PC-9 (cell line): ENCODE measurements at regions of chr17 and their contacts with region 1.

Region 1: GRCh38 chr17:19753049-19753444 is 4.9 kb upstream of the ALDH3A1 start:
- DNase-seq: peak; percentile 97 to 98
- H3K4me3 ChIP-seq: peak overlapping the region; percentile 52; the same call in 1 of the 2 replicates
- H3K27ac ChIP-seq: peak overlapping the region; percentile 100
- H3K4me1 ChIP-seq: peaks cover 64% of the 10 kb centered on the region
- H3K27me3 ChIP-seq: no peaks in the 10 kb centered on the region
- CTCF ChIP-seq: no peak

Region 2: DNA sequence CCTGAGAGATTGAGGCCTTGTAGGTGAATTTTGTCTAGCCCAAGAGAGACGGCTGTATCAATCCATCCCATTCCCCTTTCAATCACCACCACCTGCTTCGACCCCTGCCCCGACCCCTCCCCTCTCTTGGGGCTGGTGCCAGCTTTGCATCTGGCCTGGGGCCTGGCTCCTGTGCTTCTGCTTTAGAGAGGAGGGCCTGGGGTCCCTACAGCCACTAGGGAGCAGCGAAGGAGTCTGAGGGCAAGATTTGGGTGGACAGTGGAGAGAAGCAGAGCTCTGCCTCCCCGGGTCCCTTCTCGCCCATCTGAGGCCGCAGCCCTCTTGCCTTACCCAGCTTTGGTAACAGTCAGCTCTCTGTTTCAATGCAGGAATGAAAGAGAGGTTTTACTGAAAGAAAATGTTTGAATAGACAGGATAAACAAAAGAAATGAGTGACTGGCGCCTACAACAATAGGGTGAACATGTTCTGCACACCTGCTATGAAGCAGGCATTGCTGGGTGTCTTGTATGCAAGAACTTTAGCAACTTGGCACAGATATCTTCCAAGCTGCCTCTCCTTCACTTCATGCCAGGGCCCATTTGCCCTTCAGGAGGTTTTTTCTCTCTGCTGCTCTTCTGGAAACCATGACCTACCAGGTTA is 162.0 kb before region 1 on chr17:
- CTCF ChIA-PET with region 1: no interaction called
- POLR2A ChIA-PET with region 1: no interaction called
- intact Hi-C with region 1: no loop called
- DNase-seq: no peak
- H3K4me3 ChIP-seq: no peak overlapping the region
- H3K27ac ChIP-seq: no peak overlapping the region
- H3K4me1 ChIP-seq: no peaks in the 10 kb centered on the region
- H3K27me3 ChIP-seq: no peaks in the 10 kb centered on the region
- CTCF ChIP-seq: no peak

Region 3: GRCh38 chr17:19648475-19649406 is 104.3 kb before region 1 on chr17 and contains the start of gene ALDH3A2:
- CTCF ChIA-PET with region 1: interaction called, 5 read pairs
- POLR2A ChIA-PET with region 1: interaction called, 11 read pairs
- intact Hi-C with region 1: loop called (anchors 1 kb)
- DNase-seq: peak; percentile 93 to 99
- H3K4me3 ChIP-seq: peak within 1 kb of the TSS; percentile 92
- H3K27ac ChIP-seq: peak within 1 kb of the TSS; percentile 96
- H3K4me1 ChIP-seq: peaks cover 67% of the 10 kb centered on the region
- H3K27me3 ChIP-seq: no peaks in the 10 kb centered on the region
- CTCF ChIP-seq: no peak; the same call in 1 of the 2 replicates
- total RNA-seq, gene ALDH3A2: 271 and 290 TPM in 2 replicates

Region 4: DNA sequence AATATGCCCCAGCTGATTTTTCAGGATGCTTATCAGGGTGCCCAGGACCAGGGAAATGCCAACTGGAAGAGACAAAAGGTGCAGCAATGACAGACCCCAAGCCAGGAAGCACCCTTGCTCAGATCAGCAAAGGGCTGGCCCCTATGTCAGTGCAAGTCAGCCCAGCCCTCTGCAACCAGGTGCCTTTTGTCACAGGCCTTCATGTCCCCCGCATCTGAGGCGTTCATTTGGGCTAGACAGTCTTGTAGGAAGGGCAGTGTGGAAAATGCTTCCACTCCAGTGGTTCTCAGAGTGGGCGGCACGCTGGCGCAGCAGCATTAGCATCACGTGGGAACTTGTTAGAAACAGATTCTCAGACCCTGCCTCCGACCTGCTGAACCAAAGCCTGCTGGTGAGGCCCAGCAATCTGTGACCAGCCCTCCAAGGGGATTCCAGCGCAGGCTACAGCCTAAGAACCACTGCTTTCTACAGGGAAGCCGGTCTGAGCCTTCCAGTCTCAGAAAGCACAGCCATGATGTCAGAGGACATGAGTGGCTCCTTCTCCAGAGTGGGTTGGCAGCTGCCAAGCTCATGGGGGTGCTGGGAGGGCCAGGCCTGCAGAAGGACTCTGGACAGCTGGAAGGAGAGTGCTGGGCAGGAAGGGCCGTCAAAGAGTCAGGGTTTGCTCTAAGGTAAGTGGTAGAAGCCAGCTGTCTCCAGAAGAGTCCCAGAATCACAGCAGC is 49.8 kb before region 1 on chr17:
- CTCF ChIA-PET with region 1: interaction called, 5 read pairs
- POLR2A ChIA-PET with region 1: interaction called, 12 read pairs
- intact Hi-C with region 1: loop called (anchors 1 kb)
- DNase-seq: no peak
- H3K4me3 ChIP-seq: no peak overlapping the region
- H3K27ac ChIP-seq: no peak overlapping the region
- H3K4me1 ChIP-seq: peaks cover 13% of the 10 kb centered on the region; the same call in 1 of the 2 replicates
- H3K27me3 ChIP-seq: no peaks in the 10 kb centered on the region
- CTCF ChIP-seq: no peak

Region 5: GRCh38 chr17:19728079-19728495 is 25.0 kb before region 1 on chr17:
- CTCF ChIA-PET with region 1: interaction called, 7 read pairs
- POLR2A ChIA-PET with region 1: interaction called, 22 read pairs
- intact Hi-C with region 1: loop called (anchors 1 kb)
- DNase-seq: peak; percentile 89 to 95
- H3K4me3 ChIP-seq: no peak overlapping the region
- H3K27ac ChIP-seq: peak overlapping the region; percentile 70
- H3K4me1 ChIP-seq: peaks cover 61% of the 10 kb centered on the region
- H3K27me3 ChIP-seq: no peaks in the 10 kb centered on the region
- CTCF ChIP-seq: no peak